Calu3 (cell line): ENCODE measurements at regions of chr1 and their contacts with region 1.

Region 1: GRCh38 chr1:185170291-185170848 is 13.4 kb downstream of the SWT1 start:
- DNase-seq: peak; percentile 41
- H3K4me3 Mint-ChIP-seq: no peak overlapping the region
- H3K27ac Mint-ChIP-seq: no peak overlapping the region
- H3K4me1 Mint-ChIP-seq: no peaks in the 10 kb centered on the region
- H3K27me3 Mint-ChIP-seq: no peaks in the 10 kb centered on the region
- CTCF ChIP-seq: peak; percentile 68

Region 2: DNA sequence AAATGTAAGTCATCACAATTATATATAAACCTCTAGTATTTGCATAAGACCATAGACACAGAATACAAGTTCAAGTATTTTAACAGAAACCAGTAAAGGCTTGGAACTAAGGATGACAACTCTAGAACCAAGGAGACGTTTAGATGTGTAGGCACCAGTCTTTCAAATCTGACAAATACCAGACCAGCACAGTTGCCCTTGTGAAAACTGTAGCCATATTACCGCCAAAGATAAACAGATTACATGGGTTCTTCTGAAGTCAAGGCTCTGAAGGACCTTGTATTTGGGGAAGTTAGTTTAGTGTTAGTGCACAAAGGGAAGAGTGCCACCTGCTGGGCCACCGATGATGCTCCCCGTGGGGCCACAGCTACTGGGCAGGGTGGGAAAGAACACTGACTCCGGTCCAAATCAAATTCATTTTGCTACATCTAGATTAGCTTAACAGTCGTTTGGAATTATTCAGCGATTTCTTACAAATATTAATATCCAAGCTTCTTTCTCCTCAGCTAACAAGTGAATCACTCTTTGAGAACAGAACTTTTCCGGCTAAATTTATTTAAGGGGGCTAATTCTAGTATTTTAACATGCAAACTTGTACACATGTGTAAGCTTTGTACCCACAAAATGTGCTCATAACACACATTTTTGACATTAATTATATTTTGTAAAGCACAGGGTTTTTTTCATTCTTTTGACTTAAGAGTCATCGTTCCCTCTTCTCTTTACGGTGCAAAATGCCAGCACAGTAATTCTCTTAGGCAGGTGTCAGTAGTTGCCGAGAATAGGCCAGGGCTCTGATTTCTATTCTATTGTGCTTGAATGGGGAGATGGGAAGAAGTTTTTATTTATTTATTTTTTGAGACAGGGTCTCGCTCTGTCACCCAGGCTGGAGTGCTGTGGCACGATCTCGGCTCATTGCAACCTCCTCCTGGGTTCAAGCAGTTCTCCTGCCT is 188.1 kb before region 1 on chr1:
- CTCF ChIA-PET with region 1: interaction called, 3 read pairs
- intact Hi-C with region 1: loop called (anchors 2 kb)
- DNase-seq: peak; percentile 83
- H3K4me3 Mint-ChIP-seq: no peak overlapping the region
- H3K27ac Mint-ChIP-seq: no peak overlapping the region
- H3K4me1 Mint-ChIP-seq: no peaks in the 10 kb centered on the region
- H3K27me3 Mint-ChIP-seq: peaks cover 23% of the 10 kb centered on the region
- CTCF ChIP-seq: peak; percentile 85

Region 3: DNA sequence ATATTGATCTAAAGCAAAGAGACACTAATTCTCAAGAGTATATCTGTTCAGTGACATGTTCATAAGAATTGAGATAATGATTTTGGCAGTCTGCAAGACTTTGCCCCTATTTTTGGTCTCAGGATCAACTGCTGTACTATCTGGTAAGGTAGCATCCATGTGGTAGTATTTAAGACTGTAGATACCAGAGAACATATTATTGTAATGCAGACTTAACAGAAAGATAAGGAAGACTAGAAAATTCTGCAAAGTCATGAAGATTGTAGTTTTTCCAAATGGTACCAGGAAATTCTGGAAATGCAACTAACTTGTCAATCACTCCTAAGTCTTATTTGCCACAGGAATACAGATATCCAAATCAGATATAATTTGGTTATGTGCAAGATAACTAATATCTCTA is 89.9 kb before region 1 on chr1:
- CTCF ChIA-PET with region 1: no interaction called
- intact Hi-C with region 1: no loop called
- DNase-seq: no peak
- H3K4me3 Mint-ChIP-seq: no peak overlapping the region
- H3K27ac Mint-ChIP-seq: no peak overlapping the region
- H3K4me1 Mint-ChIP-seq: no peaks in the 10 kb centered on the region
- H3K27me3 Mint-ChIP-seq: no peaks in the 10 kb centered on the region
- CTCF ChIP-seq: no peak

Region 4: GRCh38 chr1:185156854-185157598 is 13.3 kb before region 1 on chr1 and contains the starts of genes SWT1 and TRMT1L:
- CTCF ChIA-PET with region 1: interaction called, 17 read pairs
- intact Hi-C with region 1: no loop called
- DNase-seq: peak; percentile 99
- H3K4me3 Mint-ChIP-seq: peak within 1 kb of the TSS; percentile 84
- H3K27ac Mint-ChIP-seq: peak within 1 kb of the TSS; percentile 87
- H3K4me1 Mint-ChIP-seq: peaks cover 7% of the 10 kb centered on the region
- H3K27me3 Mint-ChIP-seq: no peaks in the 10 kb centered on the region
- CTCF ChIP-seq: no peak
- total RNA-seq, gene SWT1: 2.6 and 2.9 TPM in 2 replicates
- total RNA-seq, gene TRMT1L: 16.9 and 27.2 TPM in 2 replicates

Region 5: GRCh38 chr1:185670187-185670627 is 499.8 kb after region 1 on chr1:
- CTCF ChIA-PET with region 1: no interaction called
- intact Hi-C with region 1: loop called (anchors 5 kb)
- DNase-seq: peak; percentile 56
- H3K4me3 Mint-ChIP-seq: no peak overlapping the region
- H3K27ac Mint-ChIP-seq: no peak overlapping the region
- H3K4me1 Mint-ChIP-seq: peaks cover 12% of the 10 kb centered on the region
- H3K27me3 Mint-ChIP-seq: no peaks in the 10 kb centered on the region
- CTCF ChIP-seq: peak; percentile 39